ENCODE measurements at regions of chr2 and their contacts with region 1.

Region 1: DNA sequence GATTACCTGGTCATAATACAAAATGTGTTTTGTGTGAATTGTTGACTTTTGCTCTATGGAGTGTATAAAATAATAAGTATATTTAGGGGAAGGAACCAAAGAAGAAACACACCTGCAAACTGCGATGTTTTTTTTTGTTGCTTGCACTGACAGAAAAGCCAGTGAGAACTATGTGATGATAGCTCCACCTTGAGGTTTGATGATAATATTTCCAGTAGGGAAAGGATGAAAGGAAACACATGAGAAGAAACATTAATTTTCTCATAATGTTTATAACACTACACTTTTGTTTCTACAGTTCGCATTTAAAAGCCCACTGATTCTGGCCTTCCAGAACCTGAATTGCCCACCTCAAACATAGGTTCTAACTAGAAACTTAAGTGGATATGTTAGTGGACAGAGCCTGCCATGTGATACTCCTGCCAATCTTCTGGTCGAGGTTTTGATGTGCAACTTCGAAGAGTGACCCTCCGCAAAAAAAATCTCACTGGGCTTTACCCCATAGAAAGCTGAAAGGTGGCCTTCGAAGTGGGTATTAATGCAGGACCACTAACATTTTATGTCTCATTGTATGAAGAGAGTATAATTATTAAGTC is 476.4 kb upstream of the SPHKAP start:
- DNase-seq: no peak
- ATAC-seq: peak; percentile 45
- H3K4me3 ChIP-seq: no peak overlapping the region
- H3K27ac ChIP-seq: no peak overlapping the region
- H3K4me1 ChIP-seq: peaks cover 23% of the 10 kb centered on the region
- H3K27me3 ChIP-seq: no peaks in the 10 kb centered on the region
- CTCF ChIP-seq: peak; percentile 32 to 79 (median 70)
- POLR2A ChIP-seq: no peak

Region 2: GRCh38 chr2:227890495-227891079 is 767.3 kb before region 1 on chr2:
- intact Hi-C with region 1: loop called (anchors 10 kb)
- DNase-seq: no peak
- ATAC-seq: peak; percentile 70
- H3K4me3 ChIP-seq: no peak overlapping the region
- H3K27ac ChIP-seq: no peak overlapping the region
- H3K4me1 ChIP-seq: no peaks in the 10 kb centered on the region
- H3K27me3 ChIP-seq: no peaks in the 10 kb centered on the region
- CTCF ChIP-seq: peak in 6 of 7 experiments; percentile 46 to 76 (median 62)
- POLR2A ChIP-seq: no peak

Region 3: DNA sequence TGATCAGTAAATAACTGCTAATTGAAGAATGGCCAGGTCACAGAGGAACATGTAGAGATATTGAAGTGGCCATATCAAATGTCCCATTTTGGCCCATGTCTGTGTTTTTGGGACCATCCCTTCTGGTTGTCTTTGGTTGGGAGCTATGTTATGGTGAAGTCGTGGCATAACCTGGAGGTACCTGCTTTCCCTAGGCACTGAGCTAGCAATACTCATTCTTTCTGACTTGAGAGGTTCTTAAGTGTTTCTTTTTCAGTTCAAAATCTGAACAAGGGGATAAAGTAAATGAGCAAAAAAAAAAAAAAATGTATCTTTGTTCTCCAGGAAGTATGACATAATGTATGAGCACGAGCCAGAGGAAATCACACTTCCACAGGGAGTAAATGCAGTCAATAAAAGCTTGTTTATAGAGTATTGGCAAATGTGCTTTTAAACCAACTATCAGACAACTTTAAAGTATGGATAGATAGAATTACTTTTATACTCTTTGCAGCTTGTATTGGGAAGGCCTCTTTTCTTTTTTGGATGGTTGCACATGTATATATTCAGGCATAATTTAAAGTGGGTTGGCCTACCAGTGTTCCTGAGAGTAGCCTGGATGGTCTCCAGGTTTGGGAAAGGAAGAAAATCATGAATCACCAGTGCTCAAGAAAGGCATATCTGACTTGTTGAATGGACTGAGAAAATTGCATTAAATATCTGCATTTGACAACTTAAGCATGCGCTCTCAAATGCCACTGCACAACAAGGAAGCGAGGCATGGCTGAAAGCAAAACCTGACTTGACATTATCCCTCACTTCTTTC is 601.4 kb before region 1 on chr2:
- intact Hi-C with region 1: loop called (anchors 10 kb)
- DNase-seq: no peak
- ATAC-seq: no peak
- H3K4me3 ChIP-seq: no peak overlapping the region
- H3K27ac ChIP-seq: no peak overlapping the region
- H3K4me1 ChIP-seq: no peaks in the 10 kb centered on the region
- H3K27me3 ChIP-seq: no peaks in the 10 kb centered on the region
- CTCF ChIP-seq: no peak
- POLR2A ChIP-seq: no peak

Region 4: GRCh38 chr2:228853151-228853550 is 195.2 kb after region 1 on chr2:
- intact Hi-C with region 1: no loop called
- DNase-seq: no peak
- ATAC-seq: no peak
- H3K4me3 ChIP-seq: no peak overlapping the region
- H3K27ac ChIP-seq: no peak overlapping the region
- H3K4me1 ChIP-seq: no peaks in the 10 kb centered on the region
- H3K27me3 ChIP-seq: no peaks in the 10 kb centered on the region
- CTCF ChIP-seq: no peak
- POLR2A ChIP-seq: no peak